PC-3 (cell line): ENCODE measurements at regions of chr16 and their contacts with region 1.

Region 1: DNA sequence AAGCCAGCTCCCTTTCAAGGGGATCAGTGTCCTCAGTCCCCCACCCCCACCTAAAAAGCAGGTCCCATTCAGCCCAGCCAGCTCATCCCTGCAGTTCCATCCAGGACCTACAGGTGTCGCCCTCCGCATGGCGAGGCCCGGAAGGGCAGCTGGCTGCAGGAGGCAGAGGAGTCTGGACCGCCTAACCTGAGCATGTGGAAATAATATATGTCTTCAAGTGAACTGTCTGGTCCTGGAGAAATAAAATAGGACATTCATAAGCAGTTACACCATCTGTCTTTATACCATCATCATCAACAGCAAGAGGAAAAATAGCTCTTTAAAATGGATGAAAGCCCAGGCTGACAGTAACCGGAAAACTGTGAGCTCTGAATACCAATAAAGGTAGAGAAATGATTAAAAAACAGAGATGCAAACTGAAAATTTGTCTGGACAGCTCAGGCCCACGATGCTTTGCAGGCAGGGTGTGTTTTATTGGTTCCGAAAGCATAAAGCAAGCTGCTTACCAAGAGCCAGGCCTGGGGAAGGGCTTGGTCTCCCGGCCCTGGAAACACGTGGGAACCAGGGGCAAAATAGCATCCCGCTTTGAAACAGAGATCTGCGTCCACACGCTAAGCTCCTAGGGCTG is 215.2 kb downstream of the ZFHX3 start:
- DNase-seq: peak; percentile 81
- ATAC-seq: peak; percentile 67
- H3K4me3 ChIP-seq: no peak overlapping the region
- H3K27ac ChIP-seq: no peak overlapping the region
- H3K4me1 ChIP-seq: peaks cover 5% of the 10 kb centered on the region; the same call in 1 of the 2 replicates
- H3K27me3 ChIP-seq: no peaks in the 10 kb centered on the region
- CTCF ChIP-seq: peak; percentile 92

Region 2: GRCh38 chr16:72679856-72680255 is 152.9 kb before region 1 on chr16:
- CTCF ChIA-PET with region 1: no interaction called
- POLR2A ChIA-PET with region 1: no interaction called
- intact Hi-C with region 1: no loop called
- DNase-seq: no peak
- ATAC-seq: no peak
- H3K4me3 ChIP-seq: no peak overlapping the region
- H3K27ac ChIP-seq: no peak overlapping the region
- H3K4me1 ChIP-seq: no peaks in the 10 kb centered on the region
- H3K27me3 ChIP-seq: no peaks in the 10 kb centered on the region
- CTCF ChIP-seq: no peak

Region 3: GRCh38 chr16:73196670-73197069 is 363.9 kb after region 1 on chr16:
- CTCF ChIA-PET with region 1: interaction called, 5 read pairs
- POLR2A ChIA-PET with region 1: no interaction called
- intact Hi-C with region 1: loop called (anchors 1 kb)
- DNase-seq: peak; percentile 68
- ATAC-seq: peak; percentile 70
- H3K4me3 ChIP-seq: no peak overlapping the region
- H3K27ac ChIP-seq: no peak overlapping the region
- H3K4me1 ChIP-seq: no peaks in the 10 kb centered on the region
- H3K27me3 ChIP-seq: no peaks in the 10 kb centered on the region
- CTCF ChIP-seq: peak; percentile 69